ENCODE measurements at regions of chr20 and their contacts with region 1.

Region 1: GRCh38 chr20:46132705-46133120 is 14.6 kb downstream of the CD40 start:
- DNase-seq: peak; percentile 88
- H3K4me3 ChIP-seq: peak overlapping the region in 1 of 2 experiments; percentile 33; a peak in 1 of 4 replicates
- H3K27ac ChIP-seq: no peak overlapping the region
- H3K4me1 ChIP-seq: peaks cover 0 to 35% of the 10 kb centered on the region in 2 experiments; a peak in 1 of 4 replicates
- H3K27me3 ChIP-seq: peaks cover 30% of the 10 kb centered on the region; the same call in 1 of the 2 replicates
- CTCF ChIP-seq: peak; percentile 90
- EP300 ChIP-seq: no peak
- RAD21 ChIP-seq: peak; percentile 94

Region 2: DNA sequence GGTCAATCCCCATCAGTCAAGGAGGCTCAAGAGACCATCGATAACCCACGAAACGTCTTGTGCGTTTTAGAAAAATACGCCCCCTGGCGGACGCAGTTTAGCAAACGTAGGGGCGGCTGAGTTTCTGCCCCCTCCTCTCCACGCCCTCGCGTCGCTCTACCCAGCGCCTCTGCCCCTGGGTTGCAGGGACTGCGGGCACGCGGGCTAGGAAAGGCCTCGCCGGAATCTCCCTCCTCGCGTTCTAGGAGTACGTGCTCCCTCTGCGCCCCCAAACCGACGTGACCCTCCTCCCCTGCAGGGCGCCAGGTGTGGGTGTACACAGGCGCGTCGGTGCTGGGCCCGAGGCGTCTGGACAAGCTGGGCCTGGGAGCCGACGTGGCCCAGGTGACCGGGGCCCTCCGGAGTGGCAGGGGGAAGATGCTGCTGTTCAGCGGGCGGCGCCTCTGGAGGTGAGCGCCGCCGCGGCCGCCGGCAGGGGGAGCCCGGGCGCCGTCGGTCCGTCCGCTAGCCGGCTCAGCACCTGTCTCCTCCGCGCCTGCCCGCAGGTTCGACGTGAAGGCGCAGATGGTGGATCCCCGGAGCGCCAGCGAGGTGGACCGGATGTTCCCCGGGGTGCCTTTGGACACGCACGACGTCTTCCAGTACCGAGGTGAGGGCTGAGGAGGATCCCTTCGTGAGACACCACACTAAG is 118.7 kb before region 1 on chr20:
- CTCF ChIA-PET with region 1: interaction called, 13 read pairs
- POLR2A ChIA-PET with region 1: no interaction called
- DNase-seq: peak; percentile 84
- H3K4me3 ChIP-seq: peak overlapping the region in 1 of 2 experiments; percentile 41; a peak in 2 of 4 replicates
- H3K27ac ChIP-seq: no peak overlapping the region
- H3K4me1 ChIP-seq: peaks cover 0 to 6% of the 10 kb centered on the region in 2 experiments; a peak in 1 of 4 replicates
- H3K27me3 ChIP-seq: no peaks in the 10 kb centered on the region
- CTCF ChIP-seq: peak; percentile 67
- EP300 ChIP-seq: no peak
- RAD21 ChIP-seq: peak; percentile 57

Region 3: DNA sequence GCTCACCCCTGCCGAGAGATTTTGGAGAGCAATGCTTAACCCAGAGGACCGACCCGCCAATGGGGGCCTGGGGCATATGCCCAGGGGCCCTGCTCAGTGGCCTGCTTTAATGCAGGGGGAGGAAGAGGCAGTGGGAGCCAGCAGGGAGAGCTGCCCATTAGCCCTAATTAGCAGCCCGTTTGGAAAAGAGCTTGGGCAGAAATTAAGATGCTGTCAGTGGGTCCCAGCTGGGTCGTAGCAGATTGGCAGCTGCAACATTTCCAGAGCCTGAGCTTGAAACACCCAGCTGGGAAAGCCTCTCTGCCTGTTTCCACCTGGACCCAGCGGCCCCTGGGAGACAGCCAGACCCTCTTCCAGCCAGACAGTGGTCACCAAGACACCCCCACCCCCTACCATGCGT is 24.9 kb after region 1 on chr20:
- CTCF ChIA-PET with region 1: interaction called, 347 read pairs
- POLR2A ChIA-PET with region 1: interaction called, 3 read pairs
- DNase-seq: peak; percentile 64
- H3K4me3 ChIP-seq: no peak overlapping the region
- H3K27ac ChIP-seq: peak overlapping the region in 1 of 2 experiments; percentile 72; a peak in 2 of 4 replicates
- H3K4me1 ChIP-seq: peaks cover 0 to 41% of the 10 kb centered on the region in 2 experiments; a peak in 2 of 4 replicates
- H3K27me3 ChIP-seq: peaks cover 16% of the 10 kb centered on the region; the same call in 1 of the 2 replicates
- CTCF ChIP-seq: no peak
- EP300 ChIP-seq: no peak
- RAD21 ChIP-seq: no peak

Region 4: GRCh38 chr20:46243707-46244628 is 111.3 kb after region 1 on chr20:
- CTCF ChIA-PET with region 1: interaction called, 21 read pairs
- POLR2A ChIA-PET with region 1: no interaction called
- DNase-seq: no peak
- H3K4me3 ChIP-seq: no peak overlapping the region
- H3K27ac ChIP-seq: no peak overlapping the region
- H3K4me1 ChIP-seq: no peaks in the 10 kb centered on the region; a peak in 1 of 4 replicates
- H3K27me3 ChIP-seq: no peaks in the 10 kb centered on the region
- CTCF ChIP-seq: no peak
- EP300 ChIP-seq: no peak
- RAD21 ChIP-seq: no peak

Region 5: GRCh38 chr20:46324960-46325703 is 192.4 kb after region 1 on chr20:
- CTCF ChIA-PET with region 1: interaction called, 31 read pairs
- POLR2A ChIA-PET with region 1: no interaction called
- DNase-seq: peak; percentile 71
- H3K4me3 ChIP-seq: no peak overlapping the region
- H3K27ac ChIP-seq: no peak overlapping the region
- H3K4me1 ChIP-seq: peaks cover 0 to 20% of the 10 kb centered on the region in 2 experiments; a peak in 1 of 4 replicates
- H3K27me3 ChIP-seq: no peaks in the 10 kb centered on the region
- CTCF ChIP-seq: peak; percentile 52
- EP300 ChIP-seq: no peak
- RAD21 ChIP-seq: peak; percentile 60

Region 6: DNA sequence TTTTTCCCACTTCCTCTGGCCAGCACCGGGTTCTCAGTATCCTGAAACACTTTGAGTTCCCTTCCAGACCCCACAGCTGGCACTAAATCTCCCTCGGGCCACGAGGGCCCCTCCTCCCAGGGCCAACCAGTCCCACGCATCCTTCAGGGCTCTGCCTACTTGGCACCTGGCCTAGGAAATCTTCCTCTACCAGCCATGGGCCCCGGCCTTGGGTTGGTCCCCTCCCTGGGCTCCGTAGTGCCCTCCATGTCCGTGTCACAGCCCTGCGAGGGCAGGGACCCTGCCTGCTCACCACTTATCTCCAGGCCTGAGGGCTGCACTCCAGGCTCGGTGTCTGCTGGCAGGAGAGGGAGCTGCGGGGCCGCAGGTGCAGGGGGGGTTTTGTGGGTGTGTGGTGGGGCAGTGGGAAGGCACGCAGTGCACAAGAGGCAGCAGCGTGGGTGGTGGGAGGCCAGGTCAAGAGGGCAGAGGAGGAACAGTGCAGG is 224.4 kb after region 1 on chr20:
- CTCF ChIA-PET with region 1: interaction called, 32 read pairs
- POLR2A ChIA-PET with region 1: no interaction called
- DNase-seq: peak; percentile 80
- H3K4me3 ChIP-seq: no peak overlapping the region
- H3K27ac ChIP-seq: peak overlapping the region in 1 of 2 experiments; percentile 56; a peak in 1 of 4 replicates
- H3K4me1 ChIP-seq: peaks cover 0 to 37% of the 10 kb centered on the region in 2 experiments; a peak in 1 of 4 replicates
- H3K27me3 ChIP-seq: no peaks in the 10 kb centered on the region
- CTCF ChIP-seq: no peak
- EP300 ChIP-seq: no peak
- RAD21 ChIP-seq: no peak

Region 7: DNA sequence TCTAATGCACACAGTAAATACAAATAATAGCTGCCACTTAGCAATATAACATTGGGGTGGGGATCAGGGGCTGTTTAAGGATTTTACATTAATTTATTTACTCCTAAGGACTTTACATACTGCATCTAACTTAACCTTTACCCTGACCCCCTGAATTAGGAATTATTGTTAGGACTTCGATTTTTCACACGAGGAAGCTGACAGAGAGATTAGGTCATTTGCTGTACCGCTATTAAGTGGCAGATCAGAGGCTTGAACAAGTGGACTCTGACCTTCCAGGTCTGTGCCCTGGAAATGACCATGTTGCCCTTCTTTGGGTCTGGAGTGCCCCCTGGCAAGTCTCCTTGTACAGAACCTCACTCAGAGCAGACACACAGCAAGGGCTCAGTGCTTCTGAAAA is 278.9 kb after region 1 on chr20:
- CTCF ChIA-PET with region 1: interaction called, 23 read pairs
- POLR2A ChIA-PET with region 1: no interaction called
- DNase-seq: no peak
- H3K4me3 ChIP-seq: no peak overlapping the region
- H3K27ac ChIP-seq: no peak overlapping the region
- H3K4me1 ChIP-seq: peaks cover 0 to 10% of the 10 kb centered on the region in 2 experiments; a peak in 1 of 4 replicates
- H3K27me3 ChIP-seq: no peaks in the 10 kb centered on the region
- CTCF ChIP-seq: no peak
- EP300 ChIP-seq: no peak
- RAD21 ChIP-seq: no peak